Naive thymus-derived CD4-positive, alpha-beta T cell (primary cell): ENCODE measurements at regions of chr13 and their contacts with region 1.

Region 1: GRCh38 chr13:99417201-99418102 is 83.8 kb upstream of the TM9SF2 start:
- DNase-seq: peak in 7 of 9 donors; percentile 58 to 78 (median 77)
- ATAC-seq: peak; percentile 40
- H3K4me3 ChIP-seq: peak overlapping the region; percentile 65
- H3K4me3 Mint-ChIP-seq: peak overlapping the region in 1 of 10 donors; percentile 50
- H3K27ac ChIP-seq: peak overlapping the region; percentile 91
- H3K27ac Mint-ChIP-seq: peak overlapping the region in 1 of 9 donors; percentile 26
- H3K4me1 ChIP-seq: peaks cover 18 to 78% of the 10 kb centered on the region in 2 donors
- H3K4me1 Mint-ChIP-seq: peaks cover 32 to 64% (median 49%) of the 10 kb centered on the region in 7 donors
- H3K27me3 ChIP-seq: no peaks in the 10 kb centered on the region
- H3K27me3 Mint-ChIP-seq: peaks cover 0 to 4% (median 0%) of the 10 kb centered on the region in 5 donors

Region 2: DNA sequence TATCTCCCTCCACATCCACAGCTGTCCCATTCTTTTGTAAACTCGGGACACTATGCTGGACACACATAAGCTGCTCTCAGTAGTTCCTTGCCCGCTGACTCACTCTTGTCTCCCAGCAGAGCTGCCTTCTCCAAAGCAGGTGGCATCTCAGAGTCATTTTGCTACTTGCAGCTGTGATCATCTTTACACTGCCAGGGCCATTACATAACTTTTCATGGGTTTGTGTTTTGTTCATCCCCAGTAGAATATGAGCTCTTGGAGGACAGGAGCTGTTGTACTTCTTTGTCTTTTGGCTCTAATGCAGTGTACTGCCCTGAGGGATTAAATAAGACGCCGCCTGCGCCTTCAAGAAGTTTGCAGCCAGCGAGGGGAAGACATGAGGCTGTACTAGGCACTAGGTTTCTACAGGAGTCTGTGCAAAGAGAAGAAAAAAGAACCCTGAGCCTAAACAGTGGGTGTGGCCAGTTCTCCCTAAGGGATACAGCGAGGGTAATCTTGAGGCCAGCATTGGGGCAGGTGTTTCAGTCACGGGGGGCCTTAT is 69.5 kb before region 1 on chr13:
- CTCF ChIA-PET with region 1: interaction called, 7 read pairs
- POLR2A ChIA-PET with region 1: interaction called, 10 read pairs
- intact Hi-C with region 1: no loop called
- DNase-seq: no peak
- ATAC-seq: no peak
- H3K4me3 ChIP-seq: no peak overlapping the region
- H3K4me3 Mint-ChIP-seq: peak overlapping the region in 2 of 10 donors; percentile 17 to 48
- H3K27ac ChIP-seq: peak overlapping the region; percentile 41
- H3K27ac Mint-ChIP-seq: peak overlapping the region; percentile 30 to 99 (median 96)
- H3K4me1 ChIP-seq: peaks cover 30 to 36% of the 10 kb centered on the region in 2 donors
- H3K4me1 Mint-ChIP-seq: peaks cover 42 to 98% (median 89%) of the 10 kb centered on the region in 7 donors
- H3K27me3 ChIP-seq: no peaks in the 10 kb centered on the region
- H3K27me3 Mint-ChIP-seq: no peaks in the 10 kb centered on the region

Region 3: GRCh38 chr13:99374994-99375737 is 42.3 kb before region 1 on chr13:
- CTCF ChIA-PET with region 1: interaction called, 3 read pairs
- POLR2A ChIA-PET with region 1: interaction called, 25 read pairs
- intact Hi-C with region 1: no loop called
- DNase-seq: peak; percentile 20 to 93 (median 87)
- ATAC-seq: peak; percentile 94
- H3K4me3 ChIP-seq: peak overlapping the region; percentile 38
- H3K4me3 Mint-ChIP-seq: peak overlapping the region; percentile 50 to 87 (median 72)
- H3K27ac ChIP-seq: peak overlapping the region; percentile 88
- H3K27ac Mint-ChIP-seq: peak overlapping the region; percentile 87 to 100 (median 99)
- H3K4me1 ChIP-seq: peaks cover 67 to 84% of the 10 kb centered on the region in 2 donors
- H3K4me1 Mint-ChIP-seq: peaks cover 60 to 100% (median 95%) of the 10 kb centered on the region in 7 donors
- H3K27me3 ChIP-seq: no peaks in the 10 kb centered on the region
- H3K27me3 Mint-ChIP-seq: no peaks in the 10 kb centered on the region

Region 4: GRCh38 chr13:99380921-99381645 is 36.4 kb before region 1 on chr13:
- CTCF ChIA-PET with region 1: interaction called, 4 read pairs
- POLR2A ChIA-PET with region 1: interaction called, 25 read pairs
- intact Hi-C with region 1: no loop called
- DNase-seq: peak in 8 of 9 donors; percentile 55 to 73 (median 62)
- ATAC-seq: peak; percentile 51
- H3K4me3 ChIP-seq: peak overlapping the region; percentile 1
- H3K4me3 Mint-ChIP-seq: peak overlapping the region; percentile 63 to 85 (median 76)
- H3K27ac ChIP-seq: peak overlapping the region; percentile 85
- H3K27ac Mint-ChIP-seq: peak overlapping the region; percentile 94 to 99 (median 98)
- H3K4me1 ChIP-seq: peaks cover 77 to 88% of the 10 kb centered on the region in 2 donors
- H3K4me1 Mint-ChIP-seq: peaks cover 48 to 100% (median 98%) of the 10 kb centered on the region in 7 donors
- H3K27me3 ChIP-seq: no peaks in the 10 kb centered on the region
- H3K27me3 Mint-ChIP-seq: no peaks in the 10 kb centered on the region

Region 5: GRCh38 chr13:99399636-99399974 is 17.8 kb before region 1 on chr13:
- CTCF ChIA-PET with region 1: interaction called, 4 read pairs
- POLR2A ChIA-PET with region 1: interaction called, 64 read pairs
- intact Hi-C with region 1: loop called in 1 of 2 experiments (anchors 2 kb)
- DNase-seq: no peak
- ATAC-seq: no peak
- H3K4me3 ChIP-seq: no peak overlapping the region
- H3K4me3 Mint-ChIP-seq: peak overlapping the region; percentile 52 to 76 (median 68)
- H3K27ac ChIP-seq: peak overlapping the region; percentile 34
- H3K27ac Mint-ChIP-seq: peak overlapping the region in 8 of 9 donors; percentile 74 to 97 (median 88)
- H3K4me1 ChIP-seq: peaks cover 6 to 29% of the 10 kb centered on the region in 2 donors
- H3K4me1 Mint-ChIP-seq: peaks cover 14 to 95% (median 83%) of the 10 kb centered on the region in 7 donors
- H3K27me3 ChIP-seq: no peaks in the 10 kb centered on the region
- H3K27me3 Mint-ChIP-seq: no peaks in the 10 kb centered on the region

Region 6: GRCh38 chr13:99406799-99407201 is 10.7 kb before region 1 on chr13:
- CTCF ChIA-PET with region 1: interaction called, 4 read pairs
- POLR2A ChIA-PET with region 1: interaction called, 64 read pairs
- intact Hi-C with region 1: no loop called
- DNase-seq: no peak
- ATAC-seq: no peak
- H3K4me3 ChIP-seq: no peak overlapping the region
- H3K4me3 Mint-ChIP-seq: peak overlapping the region in 8 of 10 donors; percentile 9 to 74 (median 44)
- H3K27ac ChIP-seq: peak overlapping the region; percentile 2
- H3K27ac Mint-ChIP-seq: peak overlapping the region in 8 of 9 donors; percentile 49 to 91 (median 76)
- H3K4me1 ChIP-seq: peaks cover 6 to 14% of the 10 kb centered on the region in 2 donors
- H3K4me1 Mint-ChIP-seq: peaks cover 21 to 85% (median 62%) of the 10 kb centered on the region in 7 donors
- H3K27me3 ChIP-seq: no peaks in the 10 kb centered on the region
- H3K27me3 Mint-ChIP-seq: no peaks in the 10 kb centered on the region